ENCODE measurements at regions of chr17 and their contacts with region 1.

Region 1: GRCh38 chr17:77666881-77667395 is 291.6 kb upstream of the TNRC6C start:
- DNase-seq: peak; percentile 77
- H3K4me3 Mint-ChIP-seq: peak overlapping the region; percentile 88
- H3K27ac Mint-ChIP-seq: peak overlapping the region; percentile 97
- H3K4me1 Mint-ChIP-seq: peaks cover 35% of the 10 kb centered on the region
- H3K27me3 Mint-ChIP-seq: no peaks in the 10 kb centered on the region

Region 2: GRCh38 chr17:77372444-77373298 is 294.3 kb before region 1 on chr17:
- intact Hi-C with region 1: loop called (anchors 5 kb)
- DNase-seq: peak; percentile 76
- H3K4me3 Mint-ChIP-seq: peak overlapping the region; percentile 76
- H3K27ac Mint-ChIP-seq: peak overlapping the region; percentile 68
- H3K4me1 Mint-ChIP-seq: peaks cover 57% of the 10 kb centered on the region
- H3K27me3 Mint-ChIP-seq: no peaks in the 10 kb centered on the region

Region 3: DNA sequence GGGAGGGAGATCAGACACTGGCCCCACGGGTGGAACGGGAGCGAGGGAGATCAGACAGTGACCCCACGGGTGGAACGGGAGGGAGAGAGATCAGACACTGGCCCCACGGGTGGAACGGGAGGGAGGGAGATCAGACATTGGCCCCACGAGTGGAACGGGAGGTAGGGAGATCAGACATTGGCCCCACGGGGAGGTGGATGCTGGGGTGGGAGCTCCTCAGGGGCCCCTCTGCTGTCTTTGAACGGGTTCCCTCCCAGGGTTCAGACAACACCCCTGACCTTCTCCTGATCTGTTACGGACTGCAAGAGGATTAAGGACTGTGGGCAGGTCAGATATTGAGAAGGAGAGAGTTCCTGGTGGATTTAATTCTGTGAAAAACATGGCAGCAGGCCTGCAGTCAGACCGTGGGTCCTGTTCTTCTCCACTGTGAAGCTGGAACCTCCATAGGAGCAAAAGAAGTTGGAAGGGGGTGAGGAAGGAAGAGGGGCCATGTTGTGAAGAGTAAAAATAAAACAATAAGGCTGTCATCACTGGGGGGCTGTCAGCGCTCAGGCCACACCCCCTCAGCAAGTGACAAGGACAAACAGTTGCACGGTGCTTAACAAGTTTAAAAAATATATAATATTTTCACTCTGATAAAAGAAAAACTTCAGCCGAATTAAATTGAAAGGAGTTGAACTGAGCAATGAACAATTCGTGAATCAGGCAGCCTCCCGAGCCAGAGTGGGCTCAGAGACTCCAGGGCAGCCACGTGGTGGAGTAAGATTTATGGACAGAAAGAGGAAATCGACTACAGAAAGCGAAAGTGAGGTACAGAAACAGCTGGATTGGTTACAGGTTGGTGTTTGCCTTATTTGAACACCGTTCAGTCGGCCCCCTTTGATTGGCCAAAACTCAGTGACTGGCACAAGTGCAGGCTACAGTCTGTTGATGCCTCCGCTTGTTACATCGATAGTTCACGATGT is 57.1 kb before region 1 on chr17:
- intact Hi-C with region 1: loop called (anchors 1 kb)
- DNase-seq: peak; percentile 58
- H3K4me3 Mint-ChIP-seq: peak overlapping the region; percentile 73
- H3K27ac Mint-ChIP-seq: peak overlapping the region; percentile 82
- H3K4me1 Mint-ChIP-seq: peaks cover 27% of the 10 kb centered on the region
- H3K27me3 Mint-ChIP-seq: peaks cover 15% of the 10 kb centered on the region

Region 4: GRCh38 chr17:77634710-77635109 is 32.2 kb before region 1 on chr17:
- intact Hi-C with region 1: loop called (anchors 2 kb)
- DNase-seq: peak; percentile 30
- H3K4me3 Mint-ChIP-seq: no peak overlapping the region
- H3K27ac Mint-ChIP-seq: peak overlapping the region; percentile 68
- H3K4me1 Mint-ChIP-seq: peaks cover 20% of the 10 kb centered on the region
- H3K27me3 Mint-ChIP-seq: peaks cover 2% of the 10 kb centered on the region

Region 5: GRCh38 chr17:77645072-77646045 is 21.6 kb before region 1 on chr17:
- intact Hi-C with region 1: loop called (anchors 1 kb)
- DNase-seq: peak; percentile 19
- H3K4me3 Mint-ChIP-seq: peak overlapping the region; percentile 40
- H3K27ac Mint-ChIP-seq: peak overlapping the region; percentile 86
- H3K4me1 Mint-ChIP-seq: peaks cover 24% of the 10 kb centered on the region
- H3K27me3 Mint-ChIP-seq: peaks cover 12% of the 10 kb centered on the region

Region 6: DNA sequence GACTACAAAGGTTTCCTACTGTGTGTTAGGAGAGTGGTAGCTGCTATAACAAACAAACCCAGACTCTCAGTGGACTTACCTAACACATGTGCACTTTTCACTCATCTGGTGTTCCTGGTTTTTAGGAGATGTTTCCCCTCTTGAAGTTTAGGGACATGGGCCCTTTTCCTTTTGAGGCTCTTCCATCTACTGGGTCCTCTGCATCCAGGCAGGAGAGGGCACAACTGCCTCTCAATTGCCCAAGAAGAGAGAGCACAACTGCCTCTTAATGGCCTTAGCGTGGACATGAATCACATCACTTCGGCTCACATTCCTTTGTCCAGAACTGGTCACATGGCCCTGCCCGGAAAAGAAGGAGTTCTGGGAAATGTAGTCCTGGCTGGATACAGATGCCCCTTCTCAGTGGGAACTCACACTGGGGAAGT is 281.8 kb after region 1 on chr17:
- intact Hi-C with region 1: no loop called
- DNase-seq: no peak
- H3K4me3 Mint-ChIP-seq: no peak overlapping the region
- H3K27ac Mint-ChIP-seq: no peak overlapping the region
- H3K4me1 Mint-ChIP-seq: no peaks in the 10 kb centered on the region
- H3K27me3 Mint-ChIP-seq: peaks cover 41% of the 10 kb centered on the region

Measured in activated T-helper 1 cell treated with anti-CD3 and anti-CD28 coated beads, Interleukin-12 subunit alpha, Interleukin-12 subunit beta, Interleukin-2, Interleukin-4 antibody, amounts not matched to agents 30 ng/mL and 10 ng/mL and 1 ng/mL, durations not matched to agents 14 hours and 24 hours and 36 hours (primary cell).